AG04450 (cell line): ENCODE measurements at regions of chr11 and their contacts with region 1.

Region 1: DNA sequence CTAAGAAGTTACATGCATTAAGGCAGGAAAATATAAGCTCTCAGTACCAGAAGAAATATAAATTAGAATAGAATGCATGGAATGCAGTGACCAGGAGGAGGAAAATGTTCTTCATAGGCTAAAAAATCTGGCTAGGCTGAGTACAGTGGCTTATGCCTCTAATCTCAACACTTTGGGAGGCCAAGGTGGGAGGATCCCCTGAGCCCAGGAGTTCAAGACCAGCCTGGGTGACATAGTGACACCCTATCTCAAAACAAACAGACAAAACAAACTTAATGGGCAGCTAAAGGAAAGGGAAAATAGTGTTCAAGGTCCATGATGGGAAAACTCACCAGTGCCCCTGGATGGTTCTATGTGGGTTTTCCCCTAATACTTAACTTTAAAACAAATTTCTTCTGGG is 78.3 kb upstream of the RASSF10 start:
- DNase-seq: no peak
- H3K4me3 ChIP-seq: no peak overlapping the region
- H3K27ac ChIP-seq: no peak overlapping the region
- H3K27me3 ChIP-seq: no peaks in the 10 kb centered on the region
- CTCF ChIP-seq: no peak

Region 2: DNA sequence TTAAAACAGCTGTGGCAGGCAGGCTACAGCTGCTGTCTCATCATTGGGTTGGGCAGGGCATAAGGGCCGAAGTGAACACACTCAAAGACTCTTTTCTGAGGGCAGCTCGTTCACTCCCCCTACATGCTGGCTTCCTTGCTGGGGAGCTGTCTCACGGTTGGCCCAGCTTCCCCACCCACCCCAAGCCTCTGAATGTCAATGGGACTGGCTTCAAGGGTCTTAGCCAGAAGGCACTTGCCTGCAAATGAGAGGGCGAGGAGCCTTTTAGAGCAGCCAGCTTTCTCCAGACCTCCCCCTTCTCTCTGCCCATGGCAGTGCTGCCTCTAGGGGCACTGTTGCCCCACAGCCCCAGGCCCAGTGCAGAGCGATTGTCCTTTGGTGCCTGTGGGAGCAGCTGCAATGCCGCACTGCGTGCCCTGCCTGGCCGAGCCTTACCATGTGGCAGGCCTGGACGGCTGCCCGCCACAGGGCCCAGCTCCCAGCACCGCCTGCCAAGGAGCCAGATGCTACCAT is 16.4 kb before region 1 on chr11:
- CTCF ChIA-PET with region 1: interaction called, 21 read pairs
- POLR2A ChIA-PET with region 1: no interaction called
- DNase-seq: no peak
- H3K4me3 ChIP-seq: no peak overlapping the region
- H3K27ac ChIP-seq: no peak overlapping the region
- H3K27me3 ChIP-seq: no peaks in the 10 kb centered on the region
- CTCF ChIP-seq: peak; percentile 73